ENCODE measurements at regions of chr17 and their contacts with region 1.

Region 1: DNA sequence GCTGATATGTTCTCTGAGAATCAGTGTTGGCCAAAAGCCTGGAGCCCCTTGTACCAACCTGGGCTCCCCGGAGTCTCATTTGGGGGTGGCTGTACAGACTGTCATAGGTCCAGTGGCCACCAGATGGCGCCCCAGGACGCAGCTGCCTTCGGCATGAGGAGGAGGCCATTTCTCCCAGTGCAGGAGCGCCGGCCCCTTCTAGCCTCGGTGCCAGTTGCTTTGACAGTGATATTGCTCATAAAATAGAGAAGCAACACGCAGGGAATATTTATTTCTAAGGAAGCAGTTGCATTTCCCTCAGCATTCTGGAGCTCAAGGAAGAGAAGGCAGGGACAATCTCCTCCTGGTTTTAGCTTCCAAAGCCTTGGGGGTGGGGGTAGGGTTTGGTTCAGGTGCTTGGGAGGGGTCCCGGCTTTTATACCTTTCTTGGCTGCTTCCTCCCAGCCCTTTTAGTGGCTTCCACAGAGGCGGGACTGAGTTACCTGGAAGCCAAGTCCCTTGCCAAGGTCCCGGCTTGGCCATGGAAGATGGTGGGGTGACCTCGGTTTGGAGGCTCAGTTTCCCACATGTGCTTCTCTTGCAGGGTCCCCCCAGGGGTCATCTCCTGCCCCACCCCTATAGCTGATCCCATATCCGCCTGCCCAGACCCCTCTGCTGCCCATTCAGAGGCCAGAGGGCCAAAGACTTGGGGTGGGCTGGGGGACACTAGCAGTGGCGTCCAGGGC is 117.8 kb upstream of the CDC42EP4 start:
- DNase-seq: peak; percentile 77 to 97
- ATAC-seq: peak; percentile 87 to 97
- H3K4me3 ChIP-seq: no peak overlapping the region
- H3K27ac ChIP-seq: no peak overlapping the region
- H3K4me1 ChIP-seq: peaks cover 3% of the 10 kb centered on the region; the same call in 1 of the 3 replicates
- CTCF ChIP-seq: peak; percentile 98
- EP300 ChIP-seq: no peak
- POLR2A ChIP-seq: no peak
- RAD21 ChIP-seq: peak; percentile 95 to 96

Region 2: GRCh38 chr17:72683506-72684404 is 745.8 kb before region 1 on chr17:
- CTCF ChIA-PET with region 1: no interaction called
- POLR2A ChIA-PET with region 1: no interaction called
- DNase-seq: peak; percentile 98 to 100
- ATAC-seq: peak; percentile 91 to 94
- H3K4me3 ChIP-seq: peak overlapping the region; percentile 6; the same call in 1 of the 3 replicates
- H3K27ac ChIP-seq: peak overlapping the region; percentile 89 to 94
- H3K4me1 ChIP-seq: peaks cover 48% of the 10 kb centered on the region
- CTCF ChIP-seq: no peak
- EP300 ChIP-seq: peak; percentile 96 to 97
- POLR2A ChIP-seq: no peak
- RAD21 ChIP-seq: peak; percentile 57 to 80

Region 3: DNA sequence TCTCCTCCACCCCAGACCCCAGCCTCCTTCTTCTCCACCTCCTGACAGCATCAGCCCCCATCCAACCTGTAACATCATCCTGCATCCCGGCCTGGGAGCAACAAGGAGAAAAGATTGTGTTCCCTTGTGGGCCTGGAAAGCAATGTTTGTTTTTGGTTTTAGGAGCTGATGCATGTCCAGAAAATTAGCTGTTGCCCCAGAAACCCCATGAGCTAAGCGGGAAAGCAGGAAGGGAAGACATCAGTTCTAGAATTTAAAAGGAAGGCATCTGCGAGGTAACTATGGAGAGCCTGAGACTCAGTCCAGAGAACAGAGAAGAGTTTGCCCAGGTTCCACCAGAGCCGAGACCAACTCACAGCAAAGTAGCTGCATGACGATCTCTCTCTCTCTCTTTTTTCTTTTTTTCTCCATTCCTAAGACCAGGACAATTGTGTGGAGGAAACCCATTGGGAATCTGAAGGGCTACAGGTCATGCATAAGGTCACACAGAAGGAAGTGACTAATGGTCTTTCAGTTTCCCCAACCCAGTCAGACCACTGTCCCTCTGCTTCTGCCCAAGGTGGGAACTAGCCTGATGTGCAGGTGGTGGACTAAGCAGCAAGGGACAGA is 461.5 kb before region 1 on chr17:
- CTCF ChIA-PET with region 1: no interaction called
- POLR2A ChIA-PET with region 1: no interaction called
- DNase-seq: no peak
- ATAC-seq: no peak
- H3K4me3 ChIP-seq: no peak overlapping the region
- H3K27ac ChIP-seq: no peak overlapping the region
- H3K4me1 ChIP-seq: no peaks in the 10 kb centered on the region
- CTCF ChIP-seq: no peak
- EP300 ChIP-seq: no peak
- POLR2A ChIP-seq: no peak
- RAD21 ChIP-seq: no peak

Region 4: GRCh38 chr17:73342050-73342522 is 87.5 kb before region 1 on chr17:
- CTCF ChIA-PET with region 1: no interaction called
- POLR2A ChIA-PET with region 1: no interaction called
- DNase-seq: peak; percentile 93
- ATAC-seq: peak; percentile 71 to 80
- H3K4me3 ChIP-seq: no peak overlapping the region
- H3K27ac ChIP-seq: peak overlapping the region; percentile 86 to 93
- H3K4me1 ChIP-seq: peaks cover 55% of the 10 kb centered on the region
- CTCF ChIP-seq: no peak
- EP300 ChIP-seq: peak in 1 of 2 experiments; percentile 54; a peak in 1 of 5 replicates
- POLR2A ChIP-seq: no peak
- RAD21 ChIP-seq: no peak

Region 5: DNA sequence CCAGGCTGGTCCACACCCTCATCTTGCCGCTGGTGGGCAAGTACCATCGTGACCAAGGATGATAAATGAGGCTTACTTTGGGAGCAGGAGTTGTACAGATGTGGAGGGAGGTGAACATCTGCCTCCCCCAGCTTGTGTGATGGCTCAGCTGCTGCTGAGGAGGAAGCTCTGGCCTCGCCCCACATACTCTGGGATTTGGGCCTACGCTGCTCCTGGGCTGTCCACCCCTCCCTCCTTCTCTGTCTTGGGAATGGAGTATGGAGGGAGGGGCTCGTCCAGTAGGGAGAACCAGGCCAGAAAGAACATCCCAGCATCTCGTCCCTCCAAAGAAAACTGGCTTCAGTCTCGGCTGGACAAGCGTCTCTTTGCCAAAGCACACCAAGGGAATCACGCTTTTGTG is 17.0 kb after region 1 on chr17:
- CTCF ChIA-PET with region 1: interaction called, 29 read pairs
- POLR2A ChIA-PET with region 1: no interaction called
- DNase-seq: no peak
- ATAC-seq: peak; percentile 30; a peak in 5 of 6 replicates
- H3K4me3 ChIP-seq: no peak overlapping the region
- H3K27ac ChIP-seq: no peak overlapping the region
- H3K4me1 ChIP-seq: no peaks in the 10 kb centered on the region
- CTCF ChIP-seq: no peak
- EP300 ChIP-seq: no peak
- POLR2A ChIP-seq: no peak
- RAD21 ChIP-seq: no peak

Region 6: GRCh38 chr17:73645050-73645978 is 215.7 kb after region 1 on chr17:
- CTCF ChIA-PET with region 1: interaction called, 25 read pairs
- POLR2A ChIA-PET with region 1: no interaction called
- DNase-seq: peak; percentile 40 to 59
- ATAC-seq: peak; percentile 22 to 40
- H3K4me3 ChIP-seq: peak overlapping the region; percentile 59
- H3K27ac ChIP-seq: peak overlapping the region; percentile 67 to 84; a peak in 5 of 6 replicates
- H3K4me1 ChIP-seq: peaks cover 4% of the 10 kb centered on the region; the same call in 1 of the 3 replicates
- CTCF ChIP-seq: peak; percentile 41; the same call in 2 of the 3 replicates
- EP300 ChIP-seq: no peak
- POLR2A ChIP-seq: no peak
- RAD21 ChIP-seq: peak; percentile 9 to 35; a peak in 1 of 5 replicates

Region 7: GRCh38 chr17:73748508-73748907 is 318.9 kb after region 1 on chr17:
- CTCF ChIA-PET with region 1: no interaction called
- POLR2A ChIA-PET with region 1: no interaction called
- DNase-seq: no peak
- ATAC-seq: no peak
- H3K4me3 ChIP-seq: no peak overlapping the region
- H3K27ac ChIP-seq: no peak overlapping the region
- H3K4me1 ChIP-seq: 0 out of 3 replicates have a peak, but pooled peaks cover 2% of the 10 kb centered on the region
- CTCF ChIP-seq: no peak
- EP300 ChIP-seq: no peak
- POLR2A ChIP-seq: no peak
- RAD21 ChIP-seq: no peak

Region 8: DNA sequence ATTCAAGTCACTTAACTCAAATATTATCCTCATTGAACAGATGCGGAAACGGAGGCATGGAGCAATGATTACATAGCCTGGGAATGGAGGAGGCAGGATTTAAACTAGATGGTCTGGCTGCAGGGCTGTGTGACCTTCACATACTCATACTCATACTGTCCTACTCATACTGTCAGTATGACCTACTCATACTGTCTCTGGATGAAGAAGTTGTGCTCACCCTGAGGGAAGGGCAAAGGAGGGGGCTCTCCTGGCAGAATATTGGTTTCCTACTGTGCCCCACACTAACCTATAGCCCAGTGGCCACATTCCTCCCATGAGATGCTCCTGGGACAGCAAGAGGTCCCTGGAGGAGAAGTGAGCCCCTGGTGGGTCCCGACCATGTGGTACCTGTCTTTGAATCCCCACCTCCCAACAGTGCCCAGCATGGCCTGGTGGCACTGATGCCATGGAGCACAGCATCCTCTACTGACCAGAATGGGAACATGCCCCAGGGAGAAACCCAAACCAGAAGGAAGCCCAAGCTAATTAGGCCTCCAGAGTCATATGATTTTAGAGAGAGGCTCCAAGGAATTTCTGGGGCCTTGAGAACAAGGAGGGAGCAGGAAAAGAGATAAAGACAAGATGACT is 411.9 kb after region 1 on chr17:
- CTCF ChIA-PET with region 1: interaction called, 10 read pairs
- POLR2A ChIA-PET with region 1: no interaction called
- DNase-seq: peak; percentile 54 to 60
- ATAC-seq: peak; percentile 70 to 90
- H3K4me3 ChIP-seq: no peak overlapping the region
- H3K27ac ChIP-seq: peak overlapping the region in 1 of 2 experiments; percentile 37; a peak in 1 of 6 replicates
- H3K4me1 ChIP-seq: peaks cover 6% of the 10 kb centered on the region; the same call in 1 of the 3 replicates
- CTCF ChIP-seq: peak; percentile 78
- EP300 ChIP-seq: no peak
- POLR2A ChIP-seq: no peak
- RAD21 ChIP-seq: peak; percentile 92 to 96

Region 9: GRCh38 chr17:74176546-74177001 is 747.0 kb after region 1 on chr17:
- CTCF ChIA-PET with region 1: interaction called, 53 read pairs
- POLR2A ChIA-PET with region 1: no interaction called
- DNase-seq: peak; percentile 74 to 76
- ATAC-seq: peak; percentile 88 to 96
- H3K4me3 ChIP-seq: no peak overlapping the region
- H3K27ac ChIP-seq: no peak overlapping the region
- H3K4me1 ChIP-seq: no peaks in the 10 kb centered on the region
- CTCF ChIP-seq: peak; percentile 95
- EP300 ChIP-seq: no peak
- POLR2A ChIP-seq: no peak
- RAD21 ChIP-seq: peak; percentile 97 to 98